MCF 10A (cell line): ENCODE measurements at regions of chr11 and their contacts with region 1.

Region 1: GRCh38 chr11:19240420-19241259 is at the start of gene E2F8:
- DNase-seq: peak; percentile 95
- H3K4me3 Mint-ChIP-seq: peak within 1 kb of the TSS; percentile 85
- H3K27ac Mint-ChIP-seq: peak within 1 kb of the TSS; percentile 42
- H3K4me1 Mint-ChIP-seq: peaks cover 18% of the 10 kb centered on the region
- H3K27me3 Mint-ChIP-seq: no peaks in the 10 kb centered on the region
- CTCF ChIP-seq: no peak
- total RNA-seq, gene E2F8: 0.88 and 1.2 TPM in 2 replicates

Region 2: DNA sequence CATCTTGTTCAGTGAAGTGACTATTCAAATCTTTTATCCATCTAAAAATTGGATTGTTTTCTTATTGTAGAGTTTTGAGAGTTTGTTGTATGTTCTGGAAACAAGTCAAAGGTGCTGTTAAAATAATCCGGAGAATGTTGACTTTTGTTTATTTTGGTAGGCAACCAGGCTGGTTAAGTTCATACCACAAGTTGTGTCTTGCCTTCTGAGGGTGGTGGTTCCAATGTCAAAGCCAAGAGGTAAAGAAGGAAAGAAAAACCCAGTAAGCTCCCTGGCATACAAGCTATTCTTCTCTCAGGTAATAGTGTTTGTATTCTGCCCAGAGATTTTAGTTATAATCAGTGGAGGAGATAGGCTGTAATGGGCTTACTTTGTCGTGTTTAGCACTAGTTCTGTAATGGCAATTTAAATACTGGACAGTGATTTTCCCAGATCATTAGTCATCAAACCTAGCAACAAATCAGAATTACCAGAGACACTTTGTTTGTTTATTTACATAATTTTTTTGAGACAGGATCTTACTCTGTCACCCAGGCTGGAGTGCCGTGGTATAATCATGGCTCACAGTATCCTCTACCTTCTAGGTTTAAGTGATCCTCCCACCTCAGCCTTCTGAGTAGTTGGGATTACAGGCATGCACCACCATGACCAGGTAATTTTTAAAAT is 23.8 kb before region 1 on chr11:
- CTCF ChIA-PET with region 1: no interaction called
- POLR2A ChIA-PET with region 1: interaction called, 4 read pairs
- intact Hi-C with region 1: loop called (anchors 2 kb)
- DNase-seq: peak; percentile 73
- H3K4me3 Mint-ChIP-seq: no peak overlapping the region
- H3K27ac Mint-ChIP-seq: peak overlapping the region; percentile 42
- H3K4me1 Mint-ChIP-seq: peaks cover 14% of the 10 kb centered on the region
- H3K27me3 Mint-ChIP-seq: peaks cover 31% of the 10 kb centered on the region
- CTCF ChIP-seq: no peak